Kidney (tissue), 22 donors: ENCODE measurements at regions of chr1 and their contacts with region 1.

Region 1: GRCh38 chr1:15272009-15272788 is 25.2 kb downstream of the FHAD1 start:
- DNase-seq: peak; percentile 72 to 92 (median 82)
- H3K4me3 ChIP-seq: peak overlapping the region in 1 of 3 donors; percentile 40
- H3K27ac ChIP-seq: no peak overlapping the region
- H3K4me1 ChIP-seq: peaks cover 0 to 4% (median 0%) of the 10 kb centered on the region in 3 donors
- H3K27me3 ChIP-seq: no peaks in the 10 kb centered on the region
- CTCF ChIP-seq: peak; percentile 86

Region 2: GRCh38 chr1:15152318-15153183 is 119.6 kb before region 1 on chr1:
- intact Hi-C with region 1: loop called (anchors 5 kb)
- DNase-seq: peak; percentile 92 to 96 (median 95)
- H3K4me3 ChIP-seq: peak overlapping the region; percentile 54 to 97 (median 71)
- H3K27ac ChIP-seq: peak overlapping the region; percentile 83 to 93
- H3K4me1 ChIP-seq: peaks cover 0 to 28% (median 12%) of the 10 kb centered on the region in 3 donors
- H3K27me3 ChIP-seq: no peaks in the 10 kb centered on the region
- CTCF ChIP-seq: peak; percentile 73

Region 3: GRCh38 chr1:15323351-15323988 is 51.3 kb after region 1 on chr1:
- intact Hi-C with region 1: no loop called
- DNase-seq: peak; percentile 77 to 88 (median 84)
- H3K4me3 ChIP-seq: no peak overlapping the region
- H3K27ac ChIP-seq: no peak overlapping the region
- H3K4me1 ChIP-seq: peaks cover 0 to 4% (median 0%) of the 10 kb centered on the region in 3 donors
- H3K27me3 ChIP-seq: no peaks in the 10 kb centered on the region
- CTCF ChIP-seq: peak; percentile 99

Region 4: DNA sequence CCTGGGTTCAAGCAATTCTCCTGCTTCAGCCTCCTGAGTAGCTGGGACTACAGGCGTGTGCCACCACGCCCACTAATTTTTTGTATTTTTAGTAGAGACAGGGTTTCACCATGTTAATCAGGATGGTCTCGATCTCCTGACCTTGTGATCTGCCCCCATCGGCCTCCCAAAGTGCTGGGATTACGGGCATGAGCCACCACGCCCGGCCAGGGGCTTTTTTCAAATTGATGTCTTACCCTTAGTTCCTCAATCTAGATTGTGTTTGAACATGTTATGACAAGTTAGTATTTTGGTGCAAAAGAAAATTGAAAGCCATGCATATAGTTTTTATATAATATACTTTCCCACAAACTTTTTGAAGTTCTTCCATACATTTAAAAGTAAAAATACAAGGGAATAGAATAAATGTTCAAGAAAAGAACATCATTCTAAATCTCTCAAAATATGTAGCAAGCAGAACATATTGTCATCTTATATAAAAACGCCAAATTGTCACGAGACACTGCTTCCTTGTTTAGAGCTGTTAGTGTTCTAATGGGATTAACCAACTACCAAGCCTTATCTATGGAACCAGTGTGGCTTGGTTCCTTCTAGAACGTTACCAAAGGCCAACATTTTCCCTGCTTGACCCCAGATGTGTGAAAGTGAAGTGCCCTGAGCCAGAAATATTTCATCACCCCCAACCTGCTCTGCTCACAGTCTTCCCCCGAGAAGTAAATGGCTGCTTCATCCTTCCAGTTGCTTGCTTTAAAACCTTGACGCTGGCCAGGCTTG is 402.4 kb after region 1 on chr1:
- intact Hi-C with region 1: no loop called
- DNase-seq: no peak
- H3K4me3 ChIP-seq: no peak overlapping the region
- H3K27ac ChIP-seq: no peak overlapping the region
- H3K4me1 ChIP-seq: no peaks in the 10 kb centered on the region
- H3K27me3 ChIP-seq: no peaks in the 10 kb centered on the region
- CTCF ChIP-seq: no peak